Activated T-helper 1 cell treated with anti-CD3 and anti-CD28 coated beads, Interleukin-12 subunit alpha, Interleukin-12 subunit beta, Interleukin-2, Interleukin-4 antibody, amounts not matched to agents 30 ng/mL and 10 ng/mL and 1 ng/mL, durations not matched to agents 14 hours and 24 hours and 36 hours (primary cell): ENCODE measurements at regions of chrX and their contacts with region 1.

Region 1: GRCh38 chrX:130079824-130080406 is 30.4 kb downstream of the ELF4 start:
- DNase-seq: peak; percentile 19
- H3K4me3 Mint-ChIP-seq: no peak overlapping the region
- H3K27ac Mint-ChIP-seq: peak overlapping the region; percentile 8
- H3K4me1 Mint-ChIP-seq: peaks cover 33% of the 10 kb centered on the region
- H3K27me3 Mint-ChIP-seq: no peaks in the 10 kb centered on the region

Region 2: GRCh38 chrX:130060122-130061069 is 19.5 kb before region 1 on chrX:
- intact Hi-C with region 1: loop called (anchors 2 kb)
- DNase-seq: peak; percentile 78
- H3K4me3 Mint-ChIP-seq: peak overlapping the region; percentile 73
- H3K27ac Mint-ChIP-seq: peak overlapping the region; percentile 44
- H3K4me1 Mint-ChIP-seq: no peaks in the 10 kb centered on the region
- H3K27me3 Mint-ChIP-seq: peaks cover 2% of the 10 kb centered on the region

Region 3: GRCh38 chrX:130120746-130121504 is 41.0 kb after region 1 on chrX:
- intact Hi-C with region 1: loop called (anchors 1 kb)
- DNase-seq: peak; percentile 56
- H3K4me3 Mint-ChIP-seq: peak overlapping the region; percentile 56
- H3K27ac Mint-ChIP-seq: peak overlapping the region; percentile 55
- H3K4me1 Mint-ChIP-seq: peaks cover 21% of the 10 kb centered on the region
- H3K27me3 Mint-ChIP-seq: no peaks in the 10 kb centered on the region

Region 4: GRCh38 chrX:130155564-130155963 is 75.6 kb after region 1 on chrX:
- intact Hi-C with region 1: no loop called
- DNase-seq: no peak
- H3K4me3 Mint-ChIP-seq: no peak overlapping the region
- H3K27ac Mint-ChIP-seq: no peak overlapping the region
- H3K4me1 Mint-ChIP-seq: peaks cover 11% of the 10 kb centered on the region
- H3K27me3 Mint-ChIP-seq: no peaks in the 10 kb centered on the region

Region 5: DNA sequence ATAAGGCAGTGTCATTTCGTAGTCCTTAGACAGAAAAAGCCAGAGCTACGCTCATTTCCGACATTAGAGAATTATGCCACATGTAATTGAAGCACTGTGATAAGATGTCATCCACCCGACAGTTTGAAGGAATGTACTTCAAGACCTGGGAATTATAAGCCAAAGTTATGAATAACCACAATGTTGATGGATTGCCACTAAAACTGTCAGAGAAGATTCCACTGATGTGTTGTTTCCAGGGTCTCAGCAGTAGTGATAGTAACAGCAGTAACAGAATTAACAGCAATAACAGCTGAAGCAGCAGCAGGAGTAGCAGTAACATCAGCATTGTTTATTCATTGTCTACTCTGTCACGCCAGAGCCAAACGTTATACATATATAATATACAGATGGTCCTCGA is 116.6 kb after region 1 on chrX:
- intact Hi-C with region 1: loop called (anchors 1 kb)
- DNase-seq: no peak
- H3K4me3 Mint-ChIP-seq: no peak overlapping the region
- H3K27ac Mint-ChIP-seq: no peak overlapping the region
- H3K4me1 Mint-ChIP-seq: peaks cover 4% of the 10 kb centered on the region
- H3K27me3 Mint-ChIP-seq: peaks cover 2% of the 10 kb centered on the region

Region 6: GRCh38 chrX:130401415-130402207 is 321.7 kb after region 1 on chrX and contains the start of gene RBMX2:
- intact Hi-C with region 1: loop called (anchors 5 kb)
- DNase-seq: peak; percentile 64
- H3K4me3 Mint-ChIP-seq: peak within 1 kb of the TSS; percentile 100
- H3K27ac Mint-ChIP-seq: peak within 1 kb of the TSS; percentile 89
- H3K4me1 Mint-ChIP-seq: no peaks in the 10 kb centered on the region
- H3K27me3 Mint-ChIP-seq: peaks cover 6% of the 10 kb centered on the region
- total RNA-seq, gene RBMX2: 26.0 and 26.3 TPM in 2 replicates